ENCODE measurements at regions of chr19 and their contacts with region 1.

Region 1: DNA sequence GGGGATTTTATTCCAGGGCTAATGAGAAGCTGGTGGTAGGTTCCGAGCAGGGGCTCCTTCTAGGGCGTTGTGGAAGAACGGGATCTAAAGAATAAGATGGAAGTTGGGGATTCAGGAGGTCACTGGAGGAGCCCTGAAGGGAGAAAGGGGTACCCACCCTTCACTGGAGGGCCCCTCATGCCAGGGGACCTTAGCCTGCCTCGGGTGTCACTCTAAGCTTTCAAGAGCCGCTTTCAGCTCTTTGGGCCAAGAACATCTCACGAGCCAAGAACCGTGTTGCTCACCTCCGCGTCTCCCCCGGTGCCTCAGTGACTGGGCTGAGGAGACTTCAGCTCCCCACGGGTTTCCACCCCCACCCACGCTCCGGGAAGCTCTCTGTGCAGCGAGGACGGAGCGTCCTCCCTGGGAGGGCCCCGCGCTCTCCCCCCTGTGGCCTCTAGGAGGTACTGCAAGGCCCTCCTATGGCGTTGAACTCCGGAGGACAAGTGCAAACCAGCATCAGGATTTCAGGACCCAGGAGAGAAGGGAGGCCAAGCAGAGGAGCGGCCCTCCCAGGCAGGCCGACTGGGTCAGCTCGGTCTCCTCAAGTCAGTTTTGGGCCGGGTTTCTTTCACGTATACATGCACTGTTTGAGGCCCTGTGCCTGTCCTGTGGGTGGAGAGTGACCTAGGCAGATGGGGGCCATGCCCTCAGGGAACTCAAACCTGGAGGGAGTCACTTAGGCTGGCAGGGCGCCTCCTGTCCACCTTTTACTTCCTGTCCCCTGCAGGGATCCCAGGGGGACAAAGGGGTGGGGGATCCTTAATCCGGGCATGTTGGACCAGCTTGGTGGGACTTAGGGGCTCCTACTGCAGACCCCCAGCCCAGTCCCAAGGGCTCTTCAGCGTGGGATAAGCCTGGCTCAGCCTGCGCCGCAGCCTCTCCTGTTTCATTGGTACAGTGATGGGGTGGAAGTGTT is 5.1 kb upstream of the KRTDAP start:
- DNase-seq: peak; percentile 30 to 87 (median 64)
- H3K4me3 ChIP-seq: peak overlapping the region in 32 of 59 donors; percentile 2 to 49 (median 34)
- H3K27ac ChIP-seq: peak overlapping the region in 2 of 59 donors; percentile 34 to 46
- H3K27me3 ChIP-seq: peaks cover 0 to 5% (median 0%) of the 10 kb centered on the region in 45 donors
- CTCF ChIP-seq: peak; percentile 61 to 98 (median 93)

Region 2: GRCh38 chr19:35140962-35141637 is 354.3 kb before region 1 on chr19:
- intact Hi-C with region 1: loop called in 1 of 2 experiments (anchors 10 kb)
- DNase-seq: peak; percentile 81 to 97 (median 94)
- H3K4me3 ChIP-seq: peak overlapping the region; percentile 16 to 80 (median 61)
- H3K27ac ChIP-seq: peak overlapping the region in 55 of 59 donors; percentile 13 to 99 (median 89)
- H3K27me3 ChIP-seq: peaks cover 0 to 3% (median 0%) of the 10 kb centered on the region in 45 donors
- CTCF ChIP-seq: peak in 53 of 56 donors; percentile 15 to 72 (median 48)

Region 3: GRCh38 chr19:35352448-35353304 is 142.7 kb before region 1 on chr19:
- intact Hi-C with region 1: loop called (anchors 1 to 2 kb)
- DNase-seq: peak; percentile 46 to 80 (median 68)
- H3K4me3 ChIP-seq: no peak overlapping the region
- H3K27ac ChIP-seq: peak overlapping the region in 13 of 59 donors; percentile 1 to 73 (median 38)
- H3K27me3 ChIP-seq: peaks cover 0 to 5% (median 0%) of the 10 kb centered on the region in 45 donors
- CTCF ChIP-seq: peak; percentile 46 to 93 (median 83)